Astrocyte of the cerebellum (primary cell): ENCODE measurements at regions of chr6 and their contacts with region 1.

Region 1: DNA sequence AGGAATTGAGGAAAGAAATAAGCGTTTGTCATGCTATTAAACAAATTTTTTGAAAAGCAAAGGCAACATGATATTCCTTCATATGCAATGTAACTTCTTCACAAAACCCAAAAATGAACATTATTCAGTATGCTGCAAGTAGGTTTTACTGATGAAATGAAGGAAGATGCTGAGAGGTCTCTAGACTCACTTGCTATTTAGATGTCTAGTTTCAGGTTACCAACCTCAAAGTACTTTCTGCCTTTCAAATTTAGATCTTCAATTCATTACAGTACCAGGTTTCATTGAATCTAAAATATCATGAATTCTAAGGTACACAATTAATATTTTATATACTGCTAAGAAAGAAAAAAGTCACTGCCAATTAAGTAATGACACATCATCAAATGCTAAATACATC is 39.9 kb downstream of the MYO6 start:
- DNase-seq: no peak
- H3K4me3 ChIP-seq: no peak overlapping the region
- CTCF ChIP-seq: no peak

Region 2: DNA sequence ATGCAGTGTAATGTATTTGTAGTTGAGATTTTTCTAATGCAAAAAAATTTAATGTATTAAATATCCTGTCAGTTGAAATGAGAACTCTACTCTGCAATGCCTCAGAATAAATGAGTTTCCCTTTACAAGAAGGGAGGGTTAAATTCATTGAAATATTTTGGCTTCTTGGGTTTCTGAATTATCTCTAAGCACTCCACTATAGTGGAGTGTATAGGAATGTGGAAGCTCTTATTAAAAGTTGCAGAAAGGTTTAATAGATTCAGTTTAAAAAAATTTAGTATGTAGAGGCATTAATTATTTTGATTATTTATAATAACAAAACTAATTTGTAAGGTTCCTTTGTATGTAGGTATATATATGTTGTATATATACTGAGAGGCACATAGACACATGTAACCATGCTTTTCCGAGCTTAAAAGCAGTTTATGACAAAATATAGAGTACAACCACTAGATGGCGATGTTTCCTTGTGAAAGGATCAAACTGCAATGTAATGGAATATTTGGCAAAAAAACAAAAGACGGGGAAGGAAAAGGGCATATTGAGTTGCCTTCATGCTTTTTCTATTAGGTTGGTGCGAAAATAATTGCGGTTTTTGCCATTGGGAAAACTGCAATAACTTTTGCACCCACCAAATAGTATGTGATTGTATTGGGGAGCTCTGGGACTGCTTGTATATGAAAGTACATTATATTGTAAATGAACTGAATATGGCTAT is 104.3 kb after region 1 on chr6:
- in situ Hi-C with region 1: loop called (anchors 5 kb)
- DNase-seq: peak; percentile 73
- H3K4me3 ChIP-seq: no peak overlapping the region
- CTCF ChIP-seq: peak; percentile 52